ENCODE measurements at regions of chr19 and their contacts with region 1.

Region 1: GRCh38 chr19:46520616-46521015 is 24.9 kb upstream of the PNMA8B start:
- DNase-seq: no peak
- H3K4me3 Mint-ChIP-seq: no peak overlapping the region
- H3K27ac Mint-ChIP-seq: peak overlapping the region; percentile 54
- H3K4me1 Mint-ChIP-seq: peaks cover 45% of the 10 kb centered on the region
- H3K27me3 Mint-ChIP-seq: no peaks in the 10 kb centered on the region

Region 2: GRCh38 chr19:46537136-46538097 is 16.8 kb after region 1 on chr19:
- CTCF ChIA-PET with region 1: interaction called, 19 read pairs
- POLR2A ChIA-PET with region 1: interaction called, 3 read pairs
- intact Hi-C with region 1: loop called (anchors 1 kb)
- DNase-seq: peak; percentile 74
- H3K4me3 Mint-ChIP-seq: no peak overlapping the region
- H3K27ac Mint-ChIP-seq: no peak overlapping the region
- H3K4me1 Mint-ChIP-seq: peaks cover 4% of the 10 kb centered on the region
- H3K27me3 Mint-ChIP-seq: no peaks in the 10 kb centered on the region

Region 3: GRCh38 chr19:46542428-46543230 is 22.0 kb after region 1 on chr19:
- CTCF ChIA-PET with region 1: interaction called, 19 read pairs
- POLR2A ChIA-PET with region 1: interaction called, 3 read pairs
- intact Hi-C with region 1: loop called (anchors 1 kb)
- DNase-seq: peak; percentile 84
- H3K4me3 Mint-ChIP-seq: no peak overlapping the region
- H3K27ac Mint-ChIP-seq: no peak overlapping the region
- H3K4me1 Mint-ChIP-seq: peaks cover 2% of the 10 kb centered on the region
- H3K27me3 Mint-ChIP-seq: no peaks in the 10 kb centered on the region

Region 4: DNA sequence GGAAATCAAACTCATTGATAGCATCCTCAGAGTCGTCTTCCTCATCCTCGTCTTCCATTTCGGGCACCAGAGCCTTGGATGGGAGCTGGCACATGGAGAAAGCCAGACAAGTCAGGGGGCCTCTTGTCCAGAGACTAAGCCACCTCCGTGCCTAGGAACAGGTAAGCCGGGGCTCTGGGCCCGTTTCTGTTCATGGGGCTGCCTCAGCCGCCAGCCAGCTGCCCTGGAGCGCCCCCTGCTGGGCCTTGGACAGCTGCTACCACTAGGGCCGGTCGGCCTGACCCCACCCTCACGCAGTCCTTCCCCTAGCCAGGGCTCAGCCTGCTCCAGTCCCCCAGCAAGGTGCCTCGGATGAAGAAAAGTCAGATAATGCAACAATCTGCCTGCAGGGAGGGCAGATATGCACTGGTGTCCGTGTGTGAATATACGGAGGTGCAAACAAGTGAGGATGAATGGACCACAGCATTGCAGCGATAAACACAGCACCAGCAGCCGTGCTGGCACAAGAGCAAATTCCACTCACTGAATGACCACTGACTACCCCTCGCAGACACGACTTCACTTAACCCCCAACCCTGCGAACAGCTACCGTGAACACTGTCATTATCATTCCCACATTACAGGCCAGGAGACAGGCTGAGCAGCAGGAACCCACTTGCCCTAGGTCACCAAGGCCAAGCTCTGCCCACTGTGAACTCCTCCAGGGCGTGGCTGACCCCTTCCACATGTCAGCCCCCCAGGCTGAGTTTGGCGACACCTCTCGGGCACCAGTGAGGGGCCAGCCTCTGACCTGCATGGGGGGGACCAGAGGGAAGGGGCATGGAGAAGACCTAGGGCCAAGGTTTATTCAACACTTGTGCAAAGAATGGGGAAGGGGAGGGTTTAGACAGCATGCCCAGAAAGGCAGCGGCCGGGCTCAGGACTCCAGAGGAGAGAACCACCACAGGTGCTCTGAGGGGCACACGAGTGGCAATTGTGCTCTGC is 208.4 kb after region 1 on chr19:
- CTCF ChIA-PET with region 1: no interaction called
- POLR2A ChIA-PET with region 1: no interaction called
- intact Hi-C with region 1: no loop called
- DNase-seq: peak; percentile 82
- H3K4me3 Mint-ChIP-seq: no peak overlapping the region
- H3K27ac Mint-ChIP-seq: no peak overlapping the region
- H3K4me1 Mint-ChIP-seq: peaks cover 18% of the 10 kb centered on the region
- H3K27me3 Mint-ChIP-seq: no peaks in the 10 kb centered on the region

Measured in activated CD4-positive, alpha-beta memory T cell treated with anti-CD3 and anti-CD28 coated beads for 36 hours (primary cell).